ENCODE measurements at regions of chr20 and their contacts with region 1.

Region 1: GRCh38 chr20:31661625-31662371 is 24.1 kb downstream of the COX4I2 start:
- DNase-seq: peak; percentile 90 to 95 (median 92)
- ATAC-seq: peak; percentile 88
- H3K4me3 ChIP-seq: peak overlapping the region; percentile 34
- H3K27ac ChIP-seq: peak overlapping the region; percentile 77
- H3K4me1 ChIP-seq: peaks cover 48 to 51% of the 10 kb centered on the region in 2 experiments
- H3K27me3 ChIP-seq: no peaks in the 10 kb centered on the region
- CTCF ChIP-seq: peak; percentile 66 to 84 (median 74)
- EP300 ChIP-seq: peak; percentile 49; the same call in 1 of the 2 replicates
- POLR2A ChIP-seq: peak; percentile 64
- RAD21 ChIP-seq: peak; percentile 55 to 63

Region 2: GRCh38 chr20:31674895-31675827 is 13.4 kb after region 1 on chr20:
- CTCF ChIA-PET with region 1: no interaction called
- POLR2A ChIA-PET with region 1: interaction called, 35 read pairs
- in situ Hi-C with region 1: no loop called
- intact Hi-C with region 1: loop called (anchors 1 kb)
- DNase-seq: peak; percentile 76 to 91 (median 78)
- ATAC-seq: peak; percentile 60
- H3K4me3 ChIP-seq: peak overlapping the region; percentile 20; the same call in 1 of the 2 replicates
- H3K27ac ChIP-seq: peak overlapping the region; percentile 94
- H3K4me1 ChIP-seq: peaks cover 84 to 91% of the 10 kb centered on the region in 2 experiments
- H3K27me3 ChIP-seq: no peaks in the 10 kb centered on the region
- CTCF ChIP-seq: no peak
- EP300 ChIP-seq: peak; percentile 95
- POLR2A ChIP-seq: peak; percentile 70
- RAD21 ChIP-seq: peak in 1 of 2 experiments; percentile 12; a peak in 1 of 4 replicates

Region 3: GRCh38 chr20:31684153-31685015 is 22.6 kb after region 1 on chr20:
- CTCF ChIA-PET with region 1: no interaction called
- POLR2A ChIA-PET with region 1: interaction called, 12 read pairs
- in situ Hi-C with region 1: no loop called
- intact Hi-C with region 1: no loop called
- DNase-seq: no peak
- ATAC-seq: peak; percentile 4
- H3K4me3 ChIP-seq: no peak overlapping the region
- H3K27ac ChIP-seq: peak overlapping the region; percentile 58
- H3K4me1 ChIP-seq: peaks cover 44 to 82% of the 10 kb centered on the region in 2 experiments
- H3K27me3 ChIP-seq: no peaks in the 10 kb centered on the region
- CTCF ChIP-seq: no peak
- EP300 ChIP-seq: no peak
- POLR2A ChIP-seq: no peak; the same call in 1 of the 2 replicates
- RAD21 ChIP-seq: no peak

Region 4: GRCh38 chr20:31707994-31708735 is 46.4 kb after region 1 on chr20:
- CTCF ChIA-PET with region 1: interaction called, 5 read pairs
- POLR2A ChIA-PET with region 1: interaction called, 6 read pairs
- in situ Hi-C with region 1: no loop called
- intact Hi-C with region 1: loop called (anchors 1 kb)
- DNase-seq: peak; percentile 65 to 85 (median 70)
- ATAC-seq: peak; percentile 62
- H3K4me3 ChIP-seq: no peak overlapping the region
- H3K27ac ChIP-seq: peak overlapping the region; percentile 1; the same call in 2 of the 3 replicates
- H3K4me1 ChIP-seq: peaks cover 50 to 78% of the 10 kb centered on the region in 2 experiments
- H3K27me3 ChIP-seq: no peaks in the 10 kb centered on the region
- CTCF ChIP-seq: no peak
- EP300 ChIP-seq: peak; percentile 34
- POLR2A ChIP-seq: no peak
- RAD21 ChIP-seq: no peak